ENCODE measurements at regions of chr20 and their contacts with region 1.

Region 1: DNA sequence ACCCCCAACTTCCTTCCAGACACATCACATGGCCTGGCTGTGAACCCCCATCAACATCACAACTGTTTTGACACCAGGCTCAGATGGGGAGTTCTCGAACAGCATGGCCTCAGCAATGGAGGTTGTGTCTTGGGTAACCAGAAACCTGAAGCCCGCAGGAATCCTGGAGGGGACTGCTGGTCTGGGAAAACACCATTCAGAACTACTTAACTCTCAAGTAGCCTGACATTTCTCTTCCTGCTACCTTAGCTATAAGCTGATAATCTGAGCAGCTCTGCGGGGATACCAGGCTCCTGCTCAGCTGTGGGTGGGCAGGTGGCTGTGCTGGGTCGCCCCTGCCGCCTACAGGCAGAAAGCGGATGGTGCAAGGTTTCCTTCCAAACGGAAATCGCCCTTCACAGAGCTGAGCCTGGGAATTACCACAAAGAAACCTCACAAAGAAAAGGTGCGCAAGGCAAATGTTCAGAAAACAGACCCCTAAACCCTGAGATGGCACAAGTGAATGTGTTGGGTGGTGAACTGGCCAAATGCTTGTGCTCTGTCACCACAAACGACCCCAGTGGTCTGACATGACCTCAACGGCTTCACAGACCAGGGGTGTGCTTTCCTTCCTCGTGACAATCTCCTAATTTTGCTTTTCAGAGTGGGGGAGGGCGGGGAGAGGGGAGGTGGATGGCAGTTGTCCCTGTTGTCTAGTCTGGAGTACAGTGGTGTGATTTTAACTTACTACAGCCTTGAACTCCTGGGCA is 29.5 kb downstream of the SNX5 start:
- DNase-seq: no peak
- ATAC-seq: peak; percentile 92
- H3K4me3 ChIP-seq: no peak overlapping the region
- H3K27ac ChIP-seq: peak overlapping the region; percentile 38; the same call in 1 of the 2 replicates
- H3K4me1 ChIP-seq: peaks cover 23% of the 10 kb centered on the region
- H3K27me3 ChIP-seq: no peaks in the 10 kb centered on the region
- CTCF ChIP-seq: peak; percentile 97 to 99 (median 97)
- EP300 ChIP-seq: no peak
- POLR2A ChIP-seq: no peak
- RAD21 ChIP-seq: peak; percentile 94

Region 2: DNA sequence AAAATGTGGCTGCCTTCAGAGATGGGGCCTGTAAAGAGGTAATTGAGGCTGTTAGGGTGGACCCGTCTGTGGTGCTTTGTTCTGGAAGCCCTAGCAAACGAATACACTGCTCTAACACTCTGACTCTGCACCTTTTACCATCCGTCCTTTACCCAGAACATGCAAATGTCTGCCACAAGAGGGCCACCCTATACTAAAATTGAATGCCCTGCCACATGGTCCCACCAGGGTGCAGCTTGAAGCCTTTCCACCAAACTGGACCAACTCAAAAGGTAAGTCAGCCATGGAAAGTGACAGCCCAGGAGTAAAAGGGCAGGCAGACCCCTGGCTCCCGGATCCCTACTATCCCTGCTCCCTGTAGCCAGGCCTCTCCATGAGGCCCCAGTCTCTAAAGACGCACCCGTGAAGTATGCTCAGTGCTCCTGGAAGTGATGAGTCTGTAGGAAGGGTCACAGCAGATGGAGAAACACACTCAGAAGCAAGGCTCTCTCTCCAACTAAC is 402.1 kb before region 1 on chr20:
- CTCF ChIA-PET with region 1: interaction called, 16 read pairs
- POLR2A ChIA-PET with region 1: no interaction called
- RAD21 ChIA-PET with region 1: interaction called, 5 read pairs
- SMC1A ChIA-PET with region 1: interaction called, 7 read pairs
- in situ Hi-C with region 1: loop called (anchors 5 kb)
- intact Hi-C with region 1: loop called (anchors 1 kb)
- DNase-seq: no peak
- ATAC-seq: peak; percentile 98
- H3K4me3 ChIP-seq: no peak overlapping the region
- H3K27ac ChIP-seq: no peak overlapping the region
- H3K4me1 ChIP-seq: peaks cover 6% of the 10 kb centered on the region
- H3K27me3 ChIP-seq: no peaks in the 10 kb centered on the region
- CTCF ChIP-seq: peak; percentile 83 to 93 (median 84)
- EP300 ChIP-seq: no peak
- POLR2A ChIP-seq: no peak
- RAD21 ChIP-seq: peak; percentile 95

Region 3: DNA sequence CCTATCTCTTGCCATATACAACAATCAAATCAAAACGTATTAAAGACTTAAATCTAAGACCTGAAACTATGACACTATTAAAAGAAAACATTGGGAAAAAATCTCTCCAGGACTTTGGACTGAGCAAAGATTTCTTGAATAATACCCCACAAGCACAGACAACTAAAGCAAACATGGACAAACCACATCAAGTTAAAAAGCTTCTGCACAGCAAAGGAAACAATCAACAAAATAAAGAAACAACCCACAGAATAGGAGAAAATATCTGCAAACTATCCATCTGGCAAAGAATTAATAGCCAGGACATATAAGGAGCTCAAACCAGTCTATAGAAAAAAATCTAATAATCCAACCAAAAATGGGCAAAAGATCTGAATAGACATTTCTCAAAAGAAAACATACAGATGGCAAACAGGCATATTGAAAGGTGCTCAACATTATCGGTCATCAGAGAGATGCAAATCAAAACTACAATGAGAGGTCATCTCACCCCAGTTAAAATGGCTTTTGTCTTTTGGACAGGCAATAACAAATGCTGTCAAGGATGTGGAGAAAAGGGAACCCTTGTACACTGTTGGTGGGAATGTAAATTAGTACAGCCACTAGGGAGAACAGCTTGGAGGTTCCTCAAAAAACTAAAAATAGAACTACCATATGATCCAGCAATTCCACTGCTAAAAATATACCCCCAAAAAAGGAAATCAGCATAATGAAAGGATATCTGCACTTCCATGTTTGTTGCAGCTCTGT is 46.7 kb before region 1 on chr20:
- CTCF ChIA-PET with region 1: interaction called, 31 read pairs
- POLR2A ChIA-PET with region 1: interaction called, 4 read pairs
- RAD21 ChIA-PET with region 1: interaction called, 10 read pairs
- SMC1A ChIA-PET with region 1: interaction called, 14 read pairs
- in situ Hi-C with region 1: loop called (anchors 5 kb)
- intact Hi-C with region 1: no loop called
- DNase-seq: no peak
- ATAC-seq: no peak
- H3K4me3 ChIP-seq: no peak overlapping the region
- H3K27ac ChIP-seq: no peak overlapping the region
- H3K4me1 ChIP-seq: peaks cover 22% of the 10 kb centered on the region
- H3K27me3 ChIP-seq: no peaks in the 10 kb centered on the region
- CTCF ChIP-seq: no peak
- EP300 ChIP-seq: no peak
- POLR2A ChIP-seq: no peak
- RAD21 ChIP-seq: no peak

Region 4: GRCh38 chr20:17904027-17904426 is 35.0 kb before region 1 on chr20:
- CTCF ChIA-PET with region 1: interaction called, 31 read pairs
- POLR2A ChIA-PET with region 1: interaction called, 3 read pairs
- RAD21 ChIA-PET with region 1: interaction called, 3 read pairs
- SMC1A ChIA-PET with region 1: interaction called, 4 read pairs
- in situ Hi-C with region 1: no loop called
- intact Hi-C with region 1: loop called (anchors 5 kb)
- DNase-seq: peak; percentile 64
- ATAC-seq: peak; percentile 95
- H3K4me3 ChIP-seq: no peak overlapping the region
- H3K27ac ChIP-seq: 0 out of 2 replicates have a peak overlapping the region, but pooled peaks have one; percentile 11
- H3K4me1 ChIP-seq: peaks cover 22% of the 10 kb centered on the region
- H3K27me3 ChIP-seq: no peaks in the 10 kb centered on the region
- CTCF ChIP-seq: no peak
- EP300 ChIP-seq: no peak
- POLR2A ChIP-seq: no peak
- RAD21 ChIP-seq: no peak

Region 5: DNA sequence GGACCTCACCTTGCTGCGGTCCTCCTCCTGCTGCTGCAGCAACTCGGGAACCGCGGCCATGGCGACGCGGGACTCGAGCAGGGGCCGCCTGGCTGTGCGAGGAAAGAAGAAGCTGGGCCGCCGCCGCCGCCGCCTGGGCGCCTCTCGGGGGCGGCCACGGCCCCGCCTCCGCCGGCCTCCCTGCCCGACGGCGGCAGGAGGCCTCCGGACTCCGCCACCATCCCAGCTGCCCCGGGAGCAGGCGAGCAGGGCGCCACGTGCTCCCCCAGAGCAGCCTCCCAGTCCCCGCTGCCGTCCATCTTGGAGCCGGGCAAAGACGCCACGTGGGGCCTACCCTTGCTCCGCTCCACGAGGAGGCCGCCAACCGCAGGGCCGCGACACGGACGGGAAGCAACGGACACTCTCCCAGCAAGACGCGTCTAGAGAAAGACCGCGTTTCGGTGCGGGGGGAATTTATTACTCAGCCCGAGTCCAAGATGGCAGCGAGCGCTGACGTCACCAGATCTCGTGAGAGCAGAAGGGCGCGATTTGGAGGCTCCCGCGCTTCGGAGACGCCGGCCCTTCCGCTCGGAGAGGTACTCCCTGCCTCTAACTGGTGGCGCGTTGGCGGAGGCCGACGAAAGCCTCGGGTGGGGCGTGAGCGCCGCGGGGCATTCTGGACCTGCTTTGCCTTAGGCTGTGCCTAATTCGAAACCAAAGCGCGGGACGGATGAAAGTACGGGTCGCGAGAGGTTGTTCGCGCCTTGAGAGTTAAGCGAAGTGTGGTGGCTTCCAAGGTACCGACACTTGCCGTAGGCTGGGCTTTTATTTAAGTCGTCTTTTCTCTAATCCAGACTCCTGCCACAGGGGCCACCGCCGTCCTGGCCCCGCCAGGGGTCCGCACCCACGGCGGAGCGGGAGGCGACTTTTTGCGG is 29.6 kb after region 1 on chr20 and contains the starts of genes MGME1 and SNX5:
- CTCF ChIA-PET with region 1: interaction called, 20 read pairs
- POLR2A ChIA-PET with region 1: interaction called, 5 read pairs
- RAD21 ChIA-PET with region 1: interaction called, 5 read pairs
- SMC1A ChIA-PET with region 1: interaction called, 10 read pairs
- in situ Hi-C with region 1: no loop called
- intact Hi-C with region 1: no loop called
- DNase-seq: peak; percentile 96
- ATAC-seq: peak; percentile 84
- H3K4me3 ChIP-seq: peak within 1 kb of the TSS; percentile 96
- H3K27ac ChIP-seq: peak within 1 kb of the TSS; percentile 98
- H3K4me1 ChIP-seq: no peaks in the 10 kb centered on the region; the same call in 1 of the 2 replicates
- H3K27me3 ChIP-seq: no peaks in the 10 kb centered on the region
- CTCF ChIP-seq: no peak
- EP300 ChIP-seq: 0 out of 4 replicates have a peak, but pooled peaks of 1 of the 2 experiments have one; percentile 49
- POLR2A ChIP-seq: peak; percentile 98
- RAD21 ChIP-seq: no peak
- polyA plus RNA-seq, gene MGME1: 13.4 to 14.1 TPM
- polyA plus RNA-seq, gene SNX5: 92.9 to 152 TPM

Region 6: GRCh38 chr20:18019070-18019469 is 80.0 kb after region 1 on chr20:
- CTCF ChIA-PET with region 1: interaction called, 13 read pairs
- POLR2A ChIA-PET with region 1: interaction called, 8 read pairs
- RAD21 ChIA-PET with region 1: no interaction called
- SMC1A ChIA-PET with region 1: interaction called, 4 read pairs
- in situ Hi-C with region 1: no loop called
- intact Hi-C with region 1: no loop called
- DNase-seq: no peak
- ATAC-seq: peak; percentile 95
- H3K4me3 ChIP-seq: no peak overlapping the region
- H3K27ac ChIP-seq: no peak overlapping the region
- H3K4me1 ChIP-seq: no peaks in the 10 kb centered on the region
- H3K27me3 ChIP-seq: no peaks in the 10 kb centered on the region
- CTCF ChIP-seq: peak; percentile 64 to 81 (median 70); a peak in 5 of 6 replicates
- EP300 ChIP-seq: no peak
- POLR2A ChIP-seq: no peak
- RAD21 ChIP-seq: peak; percentile 71

Measured in GM12878 (cell line).